Activated T-helper 2 cell treated with anti-CD3 and anti-CD28 coated beads, Interferon-gamma antibody, Interleukin-2, Interleukin-4, amounts not matched to agents 10 μg/mL and 5 μg/mL and 100 μg/mL, durations not matched to agents 14 hours and 24 hours and 36 hours (primary cell): ENCODE measurements at regions of chrX and their contacts with region 1.

Region 1: GRCh38 chrX:77899081-77899828 is at the start of gene COX7B:
- DNase-seq: peak; percentile 67
- H3K4me3 Mint-ChIP-seq: peak within 1 kb of the TSS; percentile 94
- H3K27ac Mint-ChIP-seq: peak within 1 kb of the TSS; percentile 92
- H3K4me1 Mint-ChIP-seq: peaks cover 12% of the 10 kb centered on the region
- H3K27me3 Mint-ChIP-seq: no peaks in the 10 kb centered on the region
- total RNA-seq, gene COX7B: 274 and 297 TPM in 2 replicates

Region 2: GRCh38 chrX:77446029-77446585 is 453.1 kb before region 1 on chrX:
- intact Hi-C with region 1: loop called (anchors 5 kb)
- DNase-seq: no peak
- H3K4me3 Mint-ChIP-seq: peak overlapping the region; percentile 73
- H3K27ac Mint-ChIP-seq: no peak overlapping the region
- H3K4me1 Mint-ChIP-seq: peaks cover 11% of the 10 kb centered on the region
- H3K27me3 Mint-ChIP-seq: peaks cover 17% of the 10 kb centered on the region

Region 3: GRCh38 chrX:77675986-77676385 is 223.3 kb before region 1 on chrX:
- intact Hi-C with region 1: loop called (anchors 10 kb)
- DNase-seq: no peak
- H3K4me3 Mint-ChIP-seq: no peak overlapping the region
- H3K27ac Mint-ChIP-seq: no peak overlapping the region
- H3K4me1 Mint-ChIP-seq: no peaks in the 10 kb centered on the region
- H3K27me3 Mint-ChIP-seq: no peaks in the 10 kb centered on the region

Region 4: DNA sequence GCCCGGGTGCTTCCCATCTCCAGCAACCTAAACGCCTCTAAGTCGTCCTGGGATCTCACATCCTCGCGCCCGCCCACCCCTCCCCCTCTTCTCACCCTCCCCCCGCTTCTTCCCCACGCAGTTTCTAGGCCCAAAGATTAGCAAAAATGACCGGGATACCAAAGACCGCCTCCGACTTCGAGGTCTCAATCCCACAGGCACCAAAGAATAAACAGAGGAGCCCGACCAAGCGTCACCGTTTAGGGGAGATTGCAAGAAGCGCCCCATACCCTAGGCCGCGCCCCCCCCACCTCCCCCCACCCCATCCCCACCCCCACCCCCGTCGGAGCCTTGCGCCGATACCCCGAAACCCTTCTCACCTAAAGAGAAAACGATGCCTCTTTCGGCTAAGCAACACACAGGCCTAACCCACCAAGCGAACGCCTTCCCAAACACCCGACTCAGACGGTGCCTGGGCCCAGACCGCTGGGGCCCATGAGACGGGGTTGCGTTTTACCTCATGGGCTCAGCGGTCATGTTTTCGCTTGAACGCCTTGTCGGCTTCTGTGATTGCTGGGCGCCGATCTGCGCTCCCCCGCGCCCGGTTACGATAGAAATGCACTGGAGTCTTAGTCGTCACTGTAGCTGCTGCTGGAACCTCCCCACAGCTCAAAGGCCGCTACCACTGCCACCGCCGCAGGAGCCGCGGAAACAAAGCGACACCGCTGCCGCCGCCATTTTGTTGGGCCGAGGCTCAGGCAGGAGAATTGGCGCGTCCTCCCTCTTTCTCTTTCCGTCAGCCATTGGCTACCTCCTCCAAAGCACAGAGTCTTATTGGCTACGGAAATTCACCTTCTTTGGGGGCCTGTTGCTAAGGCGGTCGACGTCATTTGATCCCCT is 113.5 kb before region 1 on chrX and contains the start of gene ATRX:
- intact Hi-C with region 1: loop called (anchors 1 kb)
- DNase-seq: peak; percentile 71
- H3K4me3 Mint-ChIP-seq: peak within 1 kb of the TSS; percentile 100
- H3K27ac Mint-ChIP-seq: peak within 1 kb of the TSS; percentile 100
- H3K4me1 Mint-ChIP-seq: peaks cover 20% of the 10 kb centered on the region
- H3K27me3 Mint-ChIP-seq: no peaks in the 10 kb centered on the region
- total RNA-seq, gene ATRX: 74.4 and 82.5 TPM in 2 replicates

Region 5: DNA sequence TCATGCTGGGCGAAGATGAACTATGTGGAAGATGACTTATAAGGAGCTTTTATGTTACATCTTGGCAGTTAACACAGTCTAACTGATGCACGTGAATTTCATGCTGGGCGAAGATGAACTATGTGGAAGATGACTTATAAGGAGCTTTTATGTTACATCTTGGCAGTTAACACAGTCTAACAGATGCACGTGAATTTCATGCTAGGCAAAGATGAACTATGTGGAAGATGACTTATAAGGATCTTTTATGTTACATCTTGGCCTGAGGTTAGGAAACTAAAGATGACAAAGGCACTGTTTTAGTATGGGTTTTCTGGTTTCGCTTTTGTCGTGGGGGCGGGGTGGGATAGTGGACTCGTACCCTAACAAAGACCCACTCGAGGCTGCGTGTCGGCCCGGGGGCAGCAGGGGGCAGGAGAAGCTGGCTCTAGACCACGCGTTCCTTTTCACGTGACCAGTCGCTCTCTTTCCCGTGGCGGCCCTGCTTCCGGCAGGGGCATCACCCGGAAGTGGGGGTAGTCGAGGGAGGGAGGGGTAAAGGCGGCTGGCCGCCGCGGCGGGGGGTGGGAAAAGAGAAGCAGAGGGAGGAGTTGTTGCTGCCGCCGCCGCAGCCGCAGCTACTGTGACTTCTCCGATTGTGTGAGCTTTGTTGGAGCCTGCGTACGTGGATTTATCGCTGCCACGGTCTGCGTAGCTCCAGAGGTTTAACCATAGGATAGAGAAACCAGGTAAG is 11.0 kb after region 1 on chrX and contains the start of gene ATP7A:
- intact Hi-C with region 1: loop called (anchors 1 kb)
- DNase-seq: peak; percentile 86
- H3K4me3 Mint-ChIP-seq: peak within 1 kb of the TSS; percentile 93
- H3K27ac Mint-ChIP-seq: peak within 1 kb of the TSS; percentile 97
- H3K4me1 Mint-ChIP-seq: peaks cover 9% of the 10 kb centered on the region
- H3K27me3 Mint-ChIP-seq: no peaks in the 10 kb centered on the region
- total RNA-seq, gene ATP7A: 6.2 and 6.6 TPM in 2 replicates